Astrocyte of the cerebellum (primary cell): ENCODE measurements at regions of chr7 and their contacts with region 1.

Region 1: DNA sequence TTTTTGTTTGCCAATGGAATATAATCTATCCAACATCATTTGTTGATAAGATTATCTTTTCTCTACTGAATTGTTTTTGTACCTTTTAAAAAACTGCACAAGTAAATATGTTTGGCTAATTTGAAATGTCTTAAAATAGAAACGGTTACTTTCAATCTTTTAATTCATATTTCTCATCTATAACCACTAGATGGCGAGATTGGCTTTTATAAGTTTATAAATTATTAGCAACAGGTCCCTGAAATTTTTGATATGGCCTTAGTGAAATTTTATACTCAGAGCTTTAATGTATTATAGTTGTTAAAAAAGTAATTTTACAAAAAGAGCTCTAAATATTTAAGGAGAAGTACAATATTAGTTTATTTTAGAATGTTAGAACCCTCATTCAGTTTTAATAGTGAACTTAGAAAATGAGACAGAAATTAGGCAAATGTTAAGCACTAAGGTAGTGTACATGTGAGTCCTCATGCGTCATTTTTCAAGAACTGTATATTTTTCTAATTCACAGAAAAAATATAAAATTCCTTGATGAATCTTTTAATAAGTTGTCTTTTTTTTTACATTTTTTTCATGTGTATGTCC is 592.5 kb downstream of the ARL4A start:
- DNase-seq: peak; percentile 23
- H3K4me3 ChIP-seq: no peak overlapping the region
- CTCF ChIP-seq: no peak

Region 2: DNA sequence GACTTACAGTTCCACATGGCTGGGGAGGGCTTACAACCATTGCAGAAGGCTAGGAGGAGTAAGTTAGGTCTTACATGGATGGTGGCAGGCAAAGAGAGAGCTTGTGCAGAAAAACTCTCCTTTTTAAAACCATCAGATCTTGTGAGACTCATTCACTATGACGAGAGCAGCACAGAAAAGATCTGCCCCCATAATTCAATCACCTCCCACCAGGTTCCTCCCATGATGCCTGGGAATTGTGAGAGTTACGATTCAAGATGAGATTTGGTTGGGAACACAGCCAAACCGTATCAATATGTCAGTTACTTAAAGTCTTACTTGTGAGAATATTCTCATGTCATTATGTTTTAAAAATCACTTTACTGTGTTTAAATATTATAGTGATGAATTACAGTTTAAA is 110.6 kb before region 1 on chr7:
- in situ Hi-C with region 1: no loop called
- DNase-seq: no peak
- H3K4me3 ChIP-seq: no peak overlapping the region
- CTCF ChIP-seq: no peak

Region 3: GRCh38 chr7:13189668-13190067 is 90.3 kb before region 1 on chr7:
- in situ Hi-C with region 1: no loop called
- DNase-seq: no peak
- H3K4me3 ChIP-seq: no peak overlapping the region
- CTCF ChIP-seq: no peak

Region 4: GRCh38 chr7:13724977-13725566 is 445.1 kb after region 1 on chr7:
- in situ Hi-C with region 1: loop called (anchors 25 kb)
- DNase-seq: no peak
- H3K4me3 ChIP-seq: no peak overlapping the region
- CTCF ChIP-seq: no peak

Region 5: DNA sequence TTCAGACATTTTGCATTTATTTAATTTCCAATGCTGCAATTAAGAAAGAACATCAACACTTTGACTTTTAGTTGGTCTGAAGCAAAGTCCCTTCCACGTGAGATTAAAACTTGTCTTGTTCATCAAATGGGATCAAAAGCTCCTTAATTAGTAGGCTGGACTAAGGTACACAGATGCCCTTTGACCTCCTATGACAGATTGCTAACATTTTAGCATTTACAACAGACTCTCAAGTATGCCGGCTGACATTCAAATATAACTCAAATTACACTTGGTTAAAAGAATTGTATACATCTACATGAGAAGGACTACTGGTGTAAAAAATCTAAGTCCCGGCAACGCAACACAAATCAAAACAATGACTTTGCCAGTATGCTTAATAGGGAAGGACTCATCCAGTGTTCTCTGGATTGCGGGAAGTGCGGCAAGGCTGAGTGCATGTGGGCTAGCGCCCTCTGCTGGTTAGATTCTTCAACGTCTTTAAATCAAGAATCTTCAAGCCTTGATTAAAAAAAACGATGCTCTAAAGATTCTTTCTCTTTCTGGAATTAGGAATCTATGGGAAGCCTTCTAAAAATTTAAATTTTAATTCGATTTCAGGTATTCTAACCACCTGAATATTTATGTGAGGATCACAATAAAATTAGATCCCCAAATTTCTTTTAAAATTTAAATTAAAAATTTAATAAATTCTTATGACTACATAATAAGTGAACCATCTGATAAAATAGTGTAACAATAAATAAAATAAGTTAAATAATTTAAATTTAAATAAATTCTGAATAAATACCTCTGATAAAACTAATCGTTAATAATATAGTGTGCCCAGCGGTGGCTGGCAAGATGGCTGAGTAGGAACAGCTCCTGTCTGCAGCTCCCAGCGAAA is 1177.9 kb after region 1 on chr7:
- in situ Hi-C with region 1: loop called (anchors 25 kb)
- DNase-seq: peak; percentile 81
- H3K4me3 ChIP-seq: no peak overlapping the region
- CTCF ChIP-seq: peak; percentile 76

Region 6: DNA sequence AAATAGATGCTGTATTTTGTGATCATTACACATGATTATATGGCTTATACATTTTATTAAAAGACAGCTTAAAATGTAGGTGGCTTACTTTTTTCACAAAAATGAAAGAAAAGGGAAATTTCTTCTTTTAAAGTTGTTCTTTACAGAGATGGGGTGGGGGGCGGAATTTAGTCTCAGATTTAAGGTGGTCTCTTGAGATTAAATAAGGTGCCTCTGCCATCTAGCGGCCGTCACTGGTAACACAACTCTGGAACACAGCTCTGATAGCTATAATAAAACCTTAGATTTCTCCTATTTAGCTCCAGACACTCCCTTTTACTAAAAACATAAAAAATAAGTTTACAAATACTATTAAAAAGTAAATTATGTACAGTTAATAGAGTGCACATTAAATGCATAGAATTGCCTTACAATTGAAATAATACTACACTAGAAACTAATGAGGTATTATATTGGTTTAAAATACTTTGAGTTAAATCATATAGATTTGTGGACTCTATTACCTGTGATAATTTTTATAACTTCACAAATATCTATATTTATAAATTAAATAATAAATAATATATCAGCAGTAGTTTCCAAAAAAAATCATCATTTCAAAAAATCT is 1411.8 kb after region 1 on chr7:
- in situ Hi-C with region 1: loop called (anchors 5 kb)
- DNase-seq: peak; percentile 12
- H3K4me3 ChIP-seq: no peak overlapping the region
- CTCF ChIP-seq: peak; percentile 80